CD4-positive, alpha-beta memory T cell (primary cell): ENCODE measurements at regions of chr11 and their contacts with region 1.

Region 1: GRCh38 chr11:117226388-117227385 is 5.2 kb downstream of the PCSK7 start:
- DNase-seq: peak; percentile 66 to 72 (median 68)
- H3K4me3 ChIP-seq: no peak overlapping the region
- H3K4me3 Mint-ChIP-seq: peak overlapping the region in 3 of 8 donors; percentile 21 to 66 (median 25)
- H3K27ac ChIP-seq: peak overlapping the region; percentile 7
- H3K27ac Mint-ChIP-seq: peak overlapping the region; percentile 80 to 94 (median 84)
- H3K4me1 ChIP-seq: peaks cover 46% of the 10 kb centered on the region
- H3K4me1 Mint-ChIP-seq: peaks cover 27 to 60% (median 39%) of the 10 kb centered on the region in 4 donors
- H3K27me3 ChIP-seq: no peaks in the 10 kb centered on the region
- H3K27me3 Mint-ChIP-seq: no peaks in the 10 kb centered on the region

Region 2: DNA sequence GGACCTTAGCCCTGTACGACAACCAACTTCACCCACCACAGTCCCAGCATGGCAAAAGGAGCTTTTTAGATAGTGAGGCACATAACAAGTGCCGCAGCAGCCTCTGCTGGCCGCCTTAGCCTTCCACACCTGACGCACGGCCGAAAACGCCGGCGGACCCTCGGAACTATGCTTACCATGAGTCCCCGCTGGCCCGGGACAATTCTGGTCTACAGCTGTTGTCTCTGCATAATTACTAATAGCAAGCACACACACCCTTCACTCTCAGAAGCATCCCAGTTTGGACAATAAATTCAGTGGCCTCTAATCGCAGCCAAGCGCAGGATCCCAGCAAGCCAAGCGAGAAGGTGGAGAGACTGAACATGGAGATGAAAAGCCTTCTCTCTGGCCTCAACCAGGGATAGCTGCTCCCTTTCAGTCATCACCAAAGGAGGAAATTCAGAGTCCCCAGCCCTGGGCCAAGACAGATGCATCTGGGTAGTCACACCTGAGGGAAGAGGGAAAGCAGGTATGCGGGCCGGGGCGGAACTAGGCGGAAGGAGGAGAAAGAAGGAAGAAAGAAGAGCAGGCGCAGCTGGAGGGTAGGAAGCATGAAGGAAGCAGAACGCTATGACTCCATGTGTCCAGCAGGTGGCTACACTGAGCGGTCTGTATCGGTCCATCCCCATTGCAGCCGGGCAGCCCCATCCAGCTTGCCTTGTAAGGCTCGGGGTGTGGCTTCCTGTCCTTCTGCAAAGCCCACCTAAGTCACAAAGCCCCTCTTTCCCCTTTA is 494.2 kb before region 1 on chr11:
- CTCF ChIA-PET with region 1: interaction called, 5 read pairs
- POLR2A ChIA-PET with region 1: no interaction called
- intact Hi-C with region 1: loop called (anchors 1 kb)
- DNase-seq: peak in 4 of 5 donors; percentile 41 to 50 (median 44)
- H3K4me3 ChIP-seq: no peak overlapping the region
- H3K4me3 Mint-ChIP-seq: peak overlapping the region in 1 of 8 donors; percentile 51
- H3K27ac ChIP-seq: no peak overlapping the region
- H3K27ac Mint-ChIP-seq: no peak overlapping the region
- H3K4me1 ChIP-seq: peaks cover 8% of the 10 kb centered on the region
- H3K4me1 Mint-ChIP-seq: peaks cover 4 to 9% (median 7%) of the 10 kb centered on the region in 4 donors
- H3K27me3 ChIP-seq: no peaks in the 10 kb centered on the region
- H3K27me3 Mint-ChIP-seq: peaks cover 2 to 8% of the 10 kb centered on the region in 2 donors

Region 3: GRCh38 chr11:116879800-116880625 is 346.7 kb before region 1 on chr11:
- CTCF ChIA-PET with region 1: interaction called, 9 read pairs
- POLR2A ChIA-PET with region 1: no interaction called
- intact Hi-C with region 1: loop called (anchors 1 kb)
- DNase-seq: peak; percentile 39 to 56 (median 50)
- H3K4me3 ChIP-seq: no peak overlapping the region
- H3K4me3 Mint-ChIP-seq: no peak overlapping the region
- H3K27ac ChIP-seq: no peak overlapping the region
- H3K27ac Mint-ChIP-seq: peak overlapping the region; percentile 35 to 79 (median 64)
- H3K4me1 ChIP-seq: no peaks in the 10 kb centered on the region
- H3K4me1 Mint-ChIP-seq: peaks cover 10 to 12% (median 11%) of the 10 kb centered on the region in 4 donors
- H3K27me3 ChIP-seq: no peaks in the 10 kb centered on the region
- H3K27me3 Mint-ChIP-seq: no peaks in the 10 kb centered on the region

Region 4: DNA sequence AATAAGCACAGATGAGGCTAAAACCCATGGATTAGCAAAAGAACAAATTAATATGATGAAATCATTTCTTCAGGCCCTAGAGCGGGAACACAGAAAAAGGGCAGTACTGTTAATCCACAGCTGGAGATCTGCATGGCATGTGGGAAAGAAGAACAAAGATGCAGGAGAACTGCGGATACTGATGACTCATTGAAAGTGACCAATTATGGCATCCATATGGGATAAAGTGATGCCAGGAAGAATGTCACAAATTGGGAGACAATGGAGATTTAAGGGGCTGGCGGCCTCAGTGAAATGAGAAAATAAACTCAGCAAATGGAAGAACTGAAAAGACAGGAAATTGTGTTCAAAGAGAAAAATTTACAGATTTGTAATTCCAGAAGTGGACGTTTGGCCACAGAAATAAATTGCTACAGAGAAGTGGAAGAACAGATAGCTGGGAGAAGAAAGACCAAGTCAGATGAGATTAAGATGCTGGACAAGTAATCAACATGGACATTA is 167.9 kb before region 1 on chr11:
- CTCF ChIA-PET with region 1: no interaction called
- POLR2A ChIA-PET with region 1: no interaction called
- intact Hi-C with region 1: no loop called
- DNase-seq: no peak
- H3K4me3 ChIP-seq: no peak overlapping the region
- H3K4me3 Mint-ChIP-seq: peak overlapping the region in 1 of 8 donors; percentile 53
- H3K27ac ChIP-seq: no peak overlapping the region
- H3K27ac Mint-ChIP-seq: peak overlapping the region in 4 of 7 donors; percentile 39 to 60 (median 48)
- H3K4me1 ChIP-seq: peaks cover 42% of the 10 kb centered on the region
- H3K4me1 Mint-ChIP-seq: peaks cover 55 to 79% (median 63%) of the 10 kb centered on the region in 4 donors
- H3K27me3 ChIP-seq: no peaks in the 10 kb centered on the region
- H3K27me3 Mint-ChIP-seq: no peaks in the 10 kb centered on the region

Region 5: DNA sequence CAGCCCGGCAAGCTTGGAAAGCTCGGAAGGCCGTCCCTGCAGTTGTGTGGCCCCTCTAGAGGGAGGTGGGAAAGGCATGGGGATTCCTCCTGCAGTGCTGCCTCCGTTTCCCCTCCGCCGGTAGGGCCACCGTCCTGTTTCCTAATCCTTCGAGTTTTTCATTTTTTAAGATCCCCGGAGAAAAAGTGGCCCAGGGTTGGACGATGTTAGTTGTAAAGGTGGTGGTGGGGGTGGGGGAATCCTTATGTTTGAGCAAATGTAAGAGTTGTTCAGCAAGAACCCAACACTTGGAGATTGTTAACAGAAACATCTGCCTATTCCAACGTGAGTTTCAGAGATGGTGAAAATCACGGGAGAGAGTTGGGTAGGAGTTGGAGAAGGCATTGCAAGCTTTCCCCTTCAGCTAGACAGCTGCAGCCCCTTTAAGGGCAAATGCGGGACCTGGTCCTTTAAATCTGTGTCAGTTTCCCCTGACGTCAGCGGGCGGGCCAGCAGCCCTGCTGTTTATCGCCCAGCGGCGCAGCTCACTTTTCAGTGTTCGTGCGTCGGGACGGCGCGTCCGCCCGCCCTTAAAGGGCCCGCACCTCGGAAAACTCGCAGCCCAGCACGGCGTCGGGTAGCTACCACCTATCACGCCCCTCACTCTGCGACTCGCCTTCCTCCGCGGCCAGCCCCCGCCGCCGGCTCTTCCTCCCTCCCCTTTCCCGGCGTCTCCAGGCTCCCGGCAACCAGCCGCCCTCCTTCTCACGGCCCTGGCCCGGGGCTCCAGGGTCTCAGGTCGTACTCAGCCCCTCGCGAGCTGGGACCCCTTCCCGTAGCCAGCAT is 48.3 kb before region 1 on chr11 and contains the start of gene SIDT2:
- CTCF ChIA-PET with region 1: interaction called, 48 read pairs
- POLR2A ChIA-PET with region 1: interaction called, 52 read pairs
- intact Hi-C with region 1: loop called (anchors 1 kb)
- DNase-seq: peak; percentile 85 to 90 (median 86)
- H3K4me3 ChIP-seq: peak within 1 kb of the TSS; percentile 76 to 80
- H3K4me3 Mint-ChIP-seq: peak within 1 kb of the TSS; percentile 94 to 99 (median 94)
- H3K27ac ChIP-seq: peak within 1 kb of the TSS; percentile 73
- H3K27ac Mint-ChIP-seq: peak within 1 kb of the TSS; percentile 93 to 98 (median 97)
- H3K4me1 ChIP-seq: peaks cover 30% of the 10 kb centered on the region
- H3K4me1 Mint-ChIP-seq: peaks cover 21 to 45% (median 34%) of the 10 kb centered on the region in 4 donors
- H3K27me3 ChIP-seq: no peaks in the 10 kb centered on the region
- H3K27me3 Mint-ChIP-seq: no peaks in the 10 kb centered on the region
- total RNA-seq, gene SIDT2: 60.2 to 67.3 TPM

Region 6: GRCh38 chr11:117309310-117309709 is 82.6 kb after region 1 on chr11:
- CTCF ChIA-PET with region 1: interaction called, 10 read pairs
- POLR2A ChIA-PET with region 1: interaction called, 6 read pairs
- intact Hi-C with region 1: no loop called
- DNase-seq: no peak
- H3K4me3 ChIP-seq: no peak overlapping the region
- H3K4me3 Mint-ChIP-seq: no peak overlapping the region
- H3K27ac ChIP-seq: no peak overlapping the region
- H3K27ac Mint-ChIP-seq: peak overlapping the region in 1 of 7 donors; percentile 4
- H3K4me1 ChIP-seq: peaks cover under 1% of the 10 kb centered on the region
- H3K4me1 Mint-ChIP-seq: peaks cover under 1 to 9% (median 3%) of the 10 kb centered on the region in 4 donors
- H3K27me3 ChIP-seq: no peaks in the 10 kb centered on the region
- H3K27me3 Mint-ChIP-seq: peaks cover 0 to 2% of the 10 kb centered on the region in 2 donors

Region 7: GRCh38 chr11:117327567-117328374 is 101.1 kb after region 1 on chr11 and contains the start of gene CEP164:
- CTCF ChIA-PET with region 1: interaction called, 28 read pairs
- POLR2A ChIA-PET with region 1: interaction called, 68 read pairs
- intact Hi-C with region 1: no loop called
- DNase-seq: peak; percentile 93 to 97 (median 95)
- H3K4me3 ChIP-seq: peak within 1 kb of the TSS; percentile 76 to 93
- H3K4me3 Mint-ChIP-seq: peak within 1 kb of the TSS in 6 of 8 donors; percentile 6 to 60 (median 42)
- H3K27ac ChIP-seq: peak within 1 kb of the TSS; percentile 85
- H3K27ac Mint-ChIP-seq: peak within 1 kb of the TSS in 3 of 7 donors; percentile 10 to 59 (median 53)
- H3K4me1 ChIP-seq: peaks cover 19% of the 10 kb centered on the region
- H3K4me1 Mint-ChIP-seq: peaks cover 0 to 11% (median 9%) of the 10 kb centered on the region in 4 donors
- H3K27me3 ChIP-seq: no peaks in the 10 kb centered on the region
- H3K27me3 Mint-ChIP-seq: no peaks in the 10 kb centered on the region
- total RNA-seq, gene CEP164: 40.8 to 42.5 TPM